PC-9 (cell line): ENCODE measurements at regions of chr11 and their contacts with region 1.

Region 1: DNA sequence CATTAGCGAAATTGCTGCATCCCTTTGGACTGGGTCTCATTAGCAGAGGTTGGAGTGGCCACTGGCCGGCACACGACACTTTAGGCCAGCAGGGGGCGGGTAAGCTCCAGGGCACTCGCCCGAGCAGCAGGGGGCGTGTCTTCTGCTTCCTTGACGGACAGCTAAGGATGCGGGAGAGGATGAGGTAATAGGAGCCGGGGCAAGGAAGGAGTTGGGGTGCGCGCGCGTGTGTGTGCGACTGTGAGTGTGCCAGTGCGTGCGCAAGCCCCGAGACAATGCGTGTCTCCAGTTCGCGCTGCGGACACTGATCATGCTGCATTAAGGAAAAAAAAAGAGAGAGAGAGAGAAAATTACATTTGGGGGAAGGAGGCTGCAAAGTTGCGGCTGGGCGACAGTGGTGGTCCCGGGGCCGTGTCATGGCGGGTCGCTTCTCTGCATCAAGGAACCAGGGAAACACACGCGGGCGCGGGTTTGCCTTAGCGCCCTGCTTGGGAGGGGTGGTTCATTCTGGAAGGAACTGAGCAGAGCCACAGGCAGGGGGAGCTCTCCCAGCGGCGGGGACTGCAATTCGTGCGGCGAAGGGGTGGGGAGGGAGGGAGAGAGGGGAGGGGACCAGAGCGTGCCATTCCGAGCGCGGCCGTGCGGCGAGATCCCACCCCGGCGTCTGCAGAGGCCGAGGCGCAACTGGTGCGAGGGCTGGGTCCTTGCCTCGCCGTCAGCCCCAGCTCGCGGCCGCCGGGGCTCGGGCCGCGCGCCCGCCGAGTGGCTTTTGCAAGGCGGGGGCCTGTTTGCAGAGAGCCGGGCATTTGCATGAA is at the start of gene DTX4:
- DNase-seq: peak; percentile 80 to 92
- H3K4me3 ChIP-seq: peak within 1 kb of the TSS; percentile 96
- H3K27ac ChIP-seq: peak within 1 kb of the TSS; percentile 85
- H3K4me1 ChIP-seq: peaks cover 28% of the 10 kb centered on the region
- H3K27me3 ChIP-seq: no peaks in the 10 kb centered on the region
- CTCF ChIP-seq: peak; percentile 93
- total RNA-seq, gene DTX4: 28.4 and 34.5 TPM in 2 replicates

Region 2: DNA sequence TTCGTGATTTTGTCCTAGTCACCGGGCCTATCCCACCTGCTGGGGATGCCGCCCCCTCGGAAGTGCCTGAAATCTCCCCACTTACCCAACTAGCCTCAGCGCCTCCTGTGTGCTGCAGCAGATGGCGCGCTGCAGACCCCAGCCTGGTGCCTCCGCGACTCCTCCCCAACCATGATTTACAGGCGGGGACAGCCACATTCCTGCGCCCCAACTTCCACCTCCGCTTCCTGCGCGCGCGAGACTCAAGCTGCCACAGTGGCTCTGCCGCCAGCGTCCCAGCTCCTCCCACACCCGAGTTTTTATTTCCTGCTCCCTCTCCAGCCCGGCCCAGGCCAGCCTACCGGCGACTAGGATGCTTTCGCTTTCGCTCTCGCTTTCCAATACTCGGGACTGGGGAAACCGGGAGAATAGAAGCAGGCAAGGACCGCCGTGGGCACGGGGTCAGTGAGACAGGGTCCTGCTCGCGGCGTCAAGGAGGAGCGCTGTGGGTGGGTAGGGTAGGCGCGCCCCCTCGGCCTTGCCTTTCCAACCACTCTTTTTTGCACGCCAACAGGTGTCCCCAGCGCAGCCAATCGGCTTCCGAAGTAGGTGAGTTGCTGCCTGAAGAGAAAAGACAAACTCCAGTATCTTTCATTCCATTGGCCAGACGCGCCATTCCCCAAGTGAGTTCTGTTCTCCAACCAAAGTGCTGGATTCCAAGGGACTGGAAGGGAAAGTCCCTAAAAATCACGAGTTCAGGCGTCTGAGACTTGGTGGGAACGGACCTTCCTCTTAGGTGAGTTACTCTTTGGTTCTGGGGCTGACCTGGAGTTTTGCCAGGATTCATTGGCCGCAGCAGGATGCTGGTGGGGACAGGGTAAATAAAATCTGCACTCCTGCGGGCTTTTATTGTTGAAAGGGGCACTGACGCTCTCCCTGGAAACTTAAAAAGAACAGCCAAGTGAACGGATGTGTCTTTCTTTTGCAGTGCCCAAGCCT is 28.9 kb before region 1 on chr11 and contains the start of gene FAM111A:
- CTCF ChIA-PET with region 1: interaction called, 3 read pairs
- POLR2A ChIA-PET with region 1: no interaction called
- intact Hi-C with region 1: loop called (anchors 2 kb)
- DNase-seq: peak; percentile 91 to 94
- H3K4me3 ChIP-seq: peak within 1 kb of the TSS; percentile 72
- H3K27ac ChIP-seq: peak within 1 kb of the TSS; percentile 61
- H3K4me1 ChIP-seq: peaks cover 37% of the 10 kb centered on the region
- H3K27me3 ChIP-seq: no peaks in the 10 kb centered on the region
- CTCF ChIP-seq: no peak; the same call in 1 of the 2 replicates
- total RNA-seq, gene FAM111A: 57.8 and 95.3 TPM in 2 replicates

Region 3: DNA sequence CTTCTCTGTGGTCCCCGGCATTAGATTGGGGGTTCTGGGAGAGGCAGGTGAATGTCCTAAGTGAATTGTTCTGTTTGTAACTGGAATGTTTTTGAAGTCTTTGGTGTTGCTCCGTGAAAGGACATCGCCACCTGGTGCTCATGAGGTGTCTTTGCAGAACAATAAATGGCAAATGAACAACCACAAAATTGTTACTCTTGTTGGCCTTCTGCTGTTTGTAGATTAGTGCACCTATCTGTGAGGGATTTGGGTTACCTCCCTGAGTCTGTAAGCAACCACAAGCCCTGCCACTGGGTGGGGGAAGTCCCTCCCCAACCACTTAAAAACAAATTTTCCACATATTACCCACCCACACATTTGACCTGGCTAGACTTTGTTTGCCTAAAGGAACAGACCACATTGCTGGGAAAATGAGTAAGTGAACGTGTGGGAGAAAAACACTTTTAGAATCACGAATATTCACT is 36.3 kb after region 1 on chr11:
- CTCF ChIA-PET with region 1: interaction called, 3 read pairs
- POLR2A ChIA-PET with region 1: no interaction called
- intact Hi-C with region 1: loop called (anchors 1 kb)
- DNase-seq: peak; percentile 26 to 62
- H3K4me3 ChIP-seq: no peak overlapping the region
- H3K27ac ChIP-seq: no peak overlapping the region
- H3K4me1 ChIP-seq: no peaks in the 10 kb centered on the region
- H3K27me3 ChIP-seq: no peaks in the 10 kb centered on the region
- CTCF ChIP-seq: peak; percentile 85

Region 4: GRCh38 chr11:59283825-59284772 is 112.4 kb after region 1 on chr11:
- CTCF ChIA-PET with region 1: interaction called, 3 read pairs
- POLR2A ChIA-PET with region 1: no interaction called
- intact Hi-C with region 1: loop called (anchors 1 kb)
- DNase-seq: peak; percentile 37 to 62
- H3K4me3 ChIP-seq: no peak overlapping the region
- H3K27ac ChIP-seq: no peak overlapping the region
- H3K4me1 ChIP-seq: no peaks in the 10 kb centered on the region
- H3K27me3 ChIP-seq: no peaks in the 10 kb centered on the region
- CTCF ChIP-seq: peak; percentile 87

Region 5: GRCh38 chr11:59550368-59550841 is 378.7 kb after region 1 on chr11:
- CTCF ChIA-PET with region 1: no interaction called
- POLR2A ChIA-PET with region 1: interaction called, 20 read pairs
- intact Hi-C with region 1: loop called (anchors 5 kb)
- DNase-seq: peak; percentile 91 to 94
- H3K4me3 ChIP-seq: peak overlapping the region; percentile 71
- H3K27ac ChIP-seq: peak overlapping the region; percentile 85
- H3K4me1 ChIP-seq: peaks cover 31% of the 10 kb centered on the region
- H3K27me3 ChIP-seq: no peaks in the 10 kb centered on the region
- CTCF ChIP-seq: peak; percentile 56; the same call in 1 of the 2 replicates

Region 6: DNA sequence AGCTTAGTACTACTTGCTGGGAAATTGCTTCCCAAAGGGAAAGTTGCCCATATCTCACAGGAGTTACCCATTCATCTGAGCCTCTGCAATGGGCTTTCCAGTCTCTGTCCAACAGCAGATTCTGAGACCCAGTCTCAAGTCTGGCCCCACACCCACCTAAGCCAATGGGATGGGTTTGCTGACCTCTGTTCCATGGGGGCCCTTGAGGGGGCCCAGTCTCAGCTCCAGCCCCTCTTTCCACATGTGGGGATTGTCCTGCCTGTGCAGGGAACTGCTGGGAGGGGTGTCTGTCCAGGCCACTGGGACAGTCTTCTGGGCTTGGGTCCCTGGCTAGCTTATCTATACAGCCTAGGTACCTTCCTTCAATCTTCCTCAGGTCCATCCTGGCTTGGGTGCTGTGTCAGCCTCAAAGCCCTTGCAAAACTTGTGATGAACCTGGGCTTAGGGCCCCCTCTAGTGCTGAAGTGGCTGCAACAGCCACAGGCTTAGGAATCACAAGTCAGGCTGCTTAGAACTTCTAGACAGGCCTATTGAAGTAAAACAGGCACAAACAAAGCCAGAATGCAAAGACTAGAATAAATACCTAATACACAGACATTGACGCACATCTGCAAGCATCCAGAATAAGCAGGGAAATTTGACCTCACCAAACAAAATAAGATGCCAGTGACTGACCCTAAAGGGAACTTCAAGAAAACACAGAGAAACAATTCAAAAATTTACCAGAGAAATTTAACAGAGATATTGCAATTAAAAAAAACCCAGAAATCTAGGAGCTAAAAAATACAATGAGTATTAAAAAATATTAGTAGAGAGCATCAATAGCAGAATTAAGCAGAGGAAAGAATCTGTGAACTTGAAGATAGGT is 508.8 kb after region 1 on chr11:
- CTCF ChIA-PET with region 1: no interaction called
- POLR2A ChIA-PET with region 1: no interaction called
- intact Hi-C with region 1: loop called (anchors 1 kb)
- DNase-seq: peak; percentile 65 to 70
- H3K4me3 ChIP-seq: no peak overlapping the region
- H3K27ac ChIP-seq: no peak overlapping the region
- H3K4me1 ChIP-seq: no peaks in the 10 kb centered on the region
- H3K27me3 ChIP-seq: no peaks in the 10 kb centered on the region
- CTCF ChIP-seq: peak; percentile 87